Caco-2 (cell line): ENCODE measurements at regions of chr13 and their contacts with region 1.

Region 1: GRCh38 chr13:91785431-91786119 is 387.2 kb downstream of the GPC5 start:
- DNase-seq: no peak
- H3K4me3 ChIP-seq: no peak overlapping the region
- H3K4me3 Mint-ChIP-seq: no peak overlapping the region
- H3K27ac Mint-ChIP-seq: no peak overlapping the region
- H3K4me1 ChIP-seq: peaks cover 15% of the 10 kb centered on the region
- H3K4me1 Mint-ChIP-seq: peaks cover 14% of the 10 kb centered on the region
- H3K27me3 ChIP-seq: no peaks in the 10 kb centered on the region
- H3K27me3 Mint-ChIP-seq: no peaks in the 10 kb centered on the region
- CTCF ChIP-seq: no peak

Region 2: DNA sequence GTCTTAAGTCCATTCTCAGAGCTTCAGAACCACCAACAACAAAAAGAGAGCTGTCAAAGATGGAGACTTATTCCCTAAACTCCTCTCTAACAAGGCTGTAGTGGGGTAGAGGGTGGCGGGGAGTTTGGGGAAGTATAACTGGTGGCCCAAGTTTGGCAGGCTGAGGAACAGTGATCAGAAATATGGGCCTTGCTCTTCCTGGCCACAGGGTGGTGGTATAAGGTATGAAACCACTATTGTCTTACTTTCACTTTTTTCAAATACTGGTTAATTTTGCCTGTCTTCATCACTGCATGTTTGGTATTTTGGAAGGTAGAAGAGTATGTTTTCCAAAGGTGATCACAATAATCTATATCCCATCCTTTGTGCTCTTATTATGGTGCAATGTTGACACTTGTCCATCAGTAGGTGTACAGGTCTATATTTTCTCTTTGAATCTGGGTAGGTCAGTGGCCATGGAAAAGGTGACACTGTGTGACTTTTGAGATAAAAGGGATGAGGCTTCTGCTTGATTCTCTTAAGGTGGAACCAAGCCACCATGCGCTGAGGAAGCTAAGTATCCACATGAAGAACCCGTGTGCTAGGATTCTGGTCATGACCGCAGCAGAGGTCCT is 410.4 kb before region 1 on chr13:
- CTCF ChIA-PET with region 1: no interaction called
- POLR2A ChIA-PET with region 1: no interaction called
- intact Hi-C with region 1: loop called (anchors 1 kb)
- DNase-seq: peak in 1 of 2 experiments; percentile 30
- H3K4me3 ChIP-seq: no peak overlapping the region
- H3K4me3 Mint-ChIP-seq: no peak overlapping the region
- H3K27ac Mint-ChIP-seq: no peak overlapping the region
- H3K4me1 ChIP-seq: 0 out of 2 replicates have a peak, but pooled peaks cover 3% of the 10 kb centered on the region
- H3K4me1 Mint-ChIP-seq: no peaks in the 10 kb centered on the region
- H3K27me3 ChIP-seq: no peaks in the 10 kb centered on the region
- H3K27me3 Mint-ChIP-seq: no peaks in the 10 kb centered on the region
- CTCF ChIP-seq: peak; percentile 63 to 67

Region 3: GRCh38 chr13:91406619-91407018 is 379.0 kb before region 1 on chr13:
- CTCF ChIA-PET with region 1: interaction called, 4 read pairs
- POLR2A ChIA-PET with region 1: no interaction called
- intact Hi-C with region 1: loop called (anchors 2 kb)
- DNase-seq: peak; percentile 50 to 73
- H3K4me3 ChIP-seq: no peak overlapping the region
- H3K4me3 Mint-ChIP-seq: no peak overlapping the region
- H3K27ac Mint-ChIP-seq: peak overlapping the region; percentile 16
- H3K4me1 ChIP-seq: no peaks in the 10 kb centered on the region; the same call in 1 of the 2 replicates
- H3K4me1 Mint-ChIP-seq: no peaks in the 10 kb centered on the region
- H3K27me3 ChIP-seq: no peaks in the 10 kb centered on the region
- H3K27me3 Mint-ChIP-seq: peaks cover 3% of the 10 kb centered on the region
- CTCF ChIP-seq: peak; percentile 62 to 65

Region 4: GRCh38 chr13:91470084-91470621 is 315.4 kb before region 1 on chr13:
- CTCF ChIA-PET with region 1: no interaction called
- POLR2A ChIA-PET with region 1: no interaction called
- intact Hi-C with region 1: no loop called
- DNase-seq: no peak
- H3K4me3 ChIP-seq: no peak overlapping the region
- H3K4me3 Mint-ChIP-seq: no peak overlapping the region
- H3K27ac Mint-ChIP-seq: no peak overlapping the region
- H3K4me1 ChIP-seq: no peaks in the 10 kb centered on the region; the same call in 1 of the 2 replicates
- H3K4me1 Mint-ChIP-seq: no peaks in the 10 kb centered on the region
- H3K27me3 ChIP-seq: no peaks in the 10 kb centered on the region
- H3K27me3 Mint-ChIP-seq: no peaks in the 10 kb centered on the region
- CTCF ChIP-seq: no peak

Region 5: GRCh38 chr13:91592056-91593014 is 193.2 kb before region 1 on chr13:
- CTCF ChIA-PET with region 1: no interaction called
- POLR2A ChIA-PET with region 1: no interaction called
- intact Hi-C with region 1: loop called (anchors 10 kb)
- DNase-seq: no peak
- H3K4me3 ChIP-seq: no peak overlapping the region
- H3K4me3 Mint-ChIP-seq: no peak overlapping the region
- H3K27ac Mint-ChIP-seq: no peak overlapping the region
- H3K4me1 ChIP-seq: no peaks in the 10 kb centered on the region
- H3K4me1 Mint-ChIP-seq: peaks cover 6% of the 10 kb centered on the region
- H3K27me3 ChIP-seq: no peaks in the 10 kb centered on the region
- H3K27me3 Mint-ChIP-seq: no peaks in the 10 kb centered on the region
- CTCF ChIP-seq: no peak

Region 6: GRCh38 chr13:91722267-91722884 is 63.2 kb before region 1 on chr13:
- CTCF ChIA-PET with region 1: interaction called, 6 read pairs
- POLR2A ChIA-PET with region 1: no interaction called
- intact Hi-C with region 1: loop called (anchors 1 kb)
- DNase-seq: peak in 1 of 2 experiments; percentile 21
- H3K4me3 ChIP-seq: no peak overlapping the region
- H3K4me3 Mint-ChIP-seq: no peak overlapping the region
- H3K27ac Mint-ChIP-seq: no peak overlapping the region
- H3K4me1 ChIP-seq: peaks cover 43% of the 10 kb centered on the region
- H3K4me1 Mint-ChIP-seq: peaks cover 13% of the 10 kb centered on the region
- H3K27me3 ChIP-seq: no peaks in the 10 kb centered on the region
- H3K27me3 Mint-ChIP-seq: no peaks in the 10 kb centered on the region
- CTCF ChIP-seq: peak; percentile 53 to 63